ENCODE measurements at regions of chr7 and their contacts with region 1.

Region 1: GRCh38 chr7:138726288-138726687 is 25.1 kb upstream of the SVOPL start:
- DNase-seq: peak; percentile 16
- ATAC-seq: peak; percentile 54; the same call in 1 of the 2 replicates
- H3K4me3 ChIP-seq: no peak overlapping the region
- H3K27ac ChIP-seq: no peak overlapping the region
- H3K4me1 ChIP-seq: no peaks in the 10 kb centered on the region
- H3K27me3 ChIP-seq: no peaks in the 10 kb centered on the region
- CTCF ChIP-seq: peak; percentile 46

Region 2: DNA sequence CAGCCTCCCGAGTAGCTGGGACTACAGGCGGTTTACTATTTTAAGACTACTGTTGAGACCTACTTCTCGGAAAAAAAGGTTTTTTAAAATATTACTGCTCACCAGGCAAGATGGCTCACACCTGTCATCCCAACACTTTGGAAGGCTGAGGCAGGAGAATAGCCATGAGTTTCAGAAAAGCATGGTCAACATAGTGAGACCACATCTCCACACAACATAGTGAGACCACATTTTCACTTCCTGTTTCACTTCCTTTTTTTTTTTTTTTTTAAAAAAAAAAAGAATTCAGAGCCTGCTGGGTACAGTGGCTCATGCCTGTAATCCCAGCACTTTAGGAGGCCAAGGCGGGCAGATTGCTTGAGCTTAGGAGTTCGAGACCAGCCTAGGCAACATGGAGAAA is 71.7 kb before region 1 on chr7:
- CTCF ChIA-PET with region 1: interaction called, 10 read pairs
- POLR2A ChIA-PET with region 1: no interaction called
- intact Hi-C with region 1: no loop called
- DNase-seq: no peak
- ATAC-seq: no peak
- H3K4me3 ChIP-seq: no peak overlapping the region
- H3K27ac ChIP-seq: no peak overlapping the region
- H3K4me1 ChIP-seq: no peaks in the 10 kb centered on the region
- H3K27me3 ChIP-seq: no peaks in the 10 kb centered on the region
- CTCF ChIP-seq: no peak

Region 3: GRCh38 chr7:138666385-138666784 is 59.9 kb before region 1 on chr7:
- CTCF ChIA-PET with region 1: no interaction called
- POLR2A ChIA-PET with region 1: no interaction called
- intact Hi-C with region 1: no loop called
- DNase-seq: no peak
- ATAC-seq: no peak
- H3K4me3 ChIP-seq: no peak overlapping the region
- H3K27ac ChIP-seq: no peak overlapping the region
- H3K4me1 ChIP-seq: no peaks in the 10 kb centered on the region
- H3K27me3 ChIP-seq: no peaks in the 10 kb centered on the region
- CTCF ChIP-seq: no peak

Region 4: GRCh38 chr7:138776166-138776894 is 50.0 kb after region 1 on chr7:
- CTCF ChIA-PET with region 1: no interaction called
- POLR2A ChIA-PET with region 1: no interaction called
- intact Hi-C with region 1: no loop called
- DNase-seq: no peak
- ATAC-seq: no peak
- H3K4me3 ChIP-seq: no peak overlapping the region
- H3K27ac ChIP-seq: no peak overlapping the region
- H3K4me1 ChIP-seq: no peaks in the 10 kb centered on the region
- H3K27me3 ChIP-seq: no peaks in the 10 kb centered on the region
- CTCF ChIP-seq: no peak

Measured in PC-3 (cell line).